Ascending aorta (tissue), 2 donors: ENCODE measurements at regions of chr20 and their contacts with region 1.

Region 1: DNA sequence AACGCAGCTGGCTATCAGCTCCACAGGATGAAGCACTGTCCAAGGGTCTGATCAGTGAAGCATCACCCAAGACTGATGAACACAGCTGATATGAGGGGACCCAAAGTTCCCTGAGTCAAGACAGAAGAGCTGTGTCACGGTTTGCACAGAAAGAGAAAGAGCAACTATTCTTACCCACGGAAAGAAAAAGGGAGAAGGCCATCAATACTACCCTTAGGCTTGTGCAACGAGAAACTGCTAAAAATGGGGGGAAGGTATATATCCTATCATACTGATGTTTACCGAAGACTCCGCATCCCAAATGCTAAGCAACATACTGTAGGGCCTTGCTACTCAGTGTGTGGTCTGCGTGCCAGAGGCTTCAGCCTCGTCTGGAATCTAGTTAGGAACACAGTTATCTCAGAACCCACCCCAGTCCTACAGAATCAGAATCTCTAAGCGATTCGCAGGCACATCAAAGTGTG is 665 bp downstream of the FASTKD5 start:
- DNase-seq: no peak
- H3K4me3 ChIP-seq: peak overlapping the region; percentile 86 to 94
- H3K27ac ChIP-seq: peak overlapping the region; percentile 81 to 89
- H3K4me1 ChIP-seq: peaks cover 12 to 27% of the 10 kb centered on the region in 2 donors
- H3K27me3 ChIP-seq: no peaks in the 10 kb centered on the region
- CTCF ChIP-seq: no peak

Region 2: GRCh38 chr20:2379511-2380229 is 779.3 kb before region 1 on chr20:
- intact Hi-C with region 1: no loop called
- DNase-seq: no peak
- H3K4me3 ChIP-seq: no peak overlapping the region
- H3K27ac ChIP-seq: no peak overlapping the region
- H3K4me1 ChIP-seq: no peaks in the 10 kb centered on the region
- H3K27me3 ChIP-seq: no peaks in the 10 kb centered on the region
- CTCF ChIP-seq: no peak

Region 3: GRCh38 chr20:3204124-3204822 is 45.3 kb after region 1 on chr20 and contains the start of gene DDRGK1:
- intact Hi-C with region 1: loop called (anchors 1 kb)
- DNase-seq: peak; percentile 51 to 94
- H3K4me3 ChIP-seq: peak within 1 kb of the TSS; percentile 72 to 90
- H3K27ac ChIP-seq: peak within 1 kb of the TSS; percentile 78 to 89
- H3K4me1 ChIP-seq: peaks cover 7 to 10% of the 10 kb centered on the region in 2 donors
- H3K27me3 ChIP-seq: no peaks in the 10 kb centered on the region
- CTCF ChIP-seq: no peak
- total RNA-seq, gene DDRGK1: 18.0 TPM